Esophagus muscularis mucosa (tissue), 4 donors: ENCODE measurements at regions of chr12 and their contacts with region 1.

Region 1: DNA sequence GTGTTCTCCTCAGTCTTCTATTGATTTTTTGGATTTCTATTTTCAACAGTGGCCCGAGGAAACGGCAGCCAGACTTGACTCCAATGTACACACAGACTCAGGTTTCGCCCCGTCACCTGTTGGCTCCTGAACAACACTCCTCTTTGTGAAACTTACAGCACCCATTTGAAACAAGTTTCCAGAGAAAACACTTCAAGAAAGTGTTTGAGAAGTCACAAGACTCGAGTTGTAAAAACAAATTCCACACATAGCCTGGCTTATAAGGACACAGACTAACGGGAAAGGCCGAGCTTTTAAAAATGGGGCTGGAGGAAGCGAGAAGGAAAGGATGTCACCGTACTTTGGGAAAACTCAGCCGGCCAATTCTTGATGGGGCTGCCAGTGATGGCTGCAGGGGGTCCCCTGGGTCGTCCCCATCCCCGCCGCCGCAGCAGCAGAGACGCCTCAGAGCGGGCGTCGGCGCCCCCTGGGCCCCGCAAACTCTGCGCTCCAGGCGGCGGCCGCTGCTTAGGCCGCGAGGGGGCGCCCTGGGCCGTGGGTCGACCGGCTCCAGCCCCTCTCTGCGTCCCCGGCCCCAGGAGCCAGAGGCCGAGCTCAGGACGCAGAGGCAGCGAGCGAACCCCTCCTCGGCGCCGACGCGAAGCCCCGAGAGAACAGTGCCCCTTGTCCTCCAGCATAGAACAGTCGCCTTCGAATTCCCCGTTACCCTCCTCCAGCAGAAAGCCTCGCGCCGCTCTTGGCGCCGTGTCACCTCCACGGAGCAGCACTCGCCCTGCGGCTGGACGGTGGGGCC is 106.9 kb downstream of the PRICKLE1 start:
- DNase-seq: no peak
- H3K4me3 ChIP-seq: peak overlapping the region; percentile 76 to 94 (median 84)
- H3K27ac ChIP-seq: peak overlapping the region; percentile 88 to 97 (median 91)
- H3K4me1 ChIP-seq: peaks cover 27 to 39% (median 29%) of the 10 kb centered on the region in 4 donors
- H3K27me3 ChIP-seq: no peaks in the 10 kb centered on the region
- CTCF ChIP-seq: peak; percentile 81 to 98 (median 96)
- EP300 ChIP-seq: peak; percentile 12
- POLR2A ChIP-seq: no peak

Region 2: DNA sequence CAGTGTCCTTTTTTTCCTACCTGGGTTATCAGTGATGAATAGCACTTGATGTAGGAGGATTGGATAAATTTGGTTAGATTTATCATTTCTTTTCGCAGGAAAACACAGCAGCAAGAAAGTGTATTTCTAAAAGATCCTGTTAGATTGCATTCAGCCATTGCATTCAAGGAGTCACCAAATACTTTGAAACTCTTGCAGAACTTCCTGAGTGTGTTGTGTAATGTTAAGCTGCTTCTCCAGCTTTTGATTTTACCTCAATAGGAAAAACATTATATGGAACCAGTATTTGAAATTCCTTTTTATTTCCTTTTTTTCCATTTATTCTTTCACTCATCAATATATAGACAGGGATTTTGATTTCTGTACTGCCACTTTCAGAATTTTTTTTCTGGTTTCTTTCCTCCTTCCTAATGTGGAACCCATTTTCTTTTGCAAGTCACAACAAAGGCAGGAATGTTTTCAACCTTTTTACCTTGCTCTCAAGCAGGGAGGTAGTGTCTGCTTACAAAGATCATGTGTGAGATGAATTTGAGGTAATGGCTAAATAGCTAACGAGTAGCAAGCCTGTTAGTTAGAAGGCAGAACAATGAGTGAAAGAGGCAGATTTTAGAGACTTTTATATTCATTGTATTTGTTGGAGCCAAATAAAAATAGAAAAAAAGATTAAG is 100.5 kb before region 1 on chr12:
- intact Hi-C with region 1: no loop called
- DNase-seq: no peak
- H3K4me3 ChIP-seq: no peak overlapping the region
- H3K27ac ChIP-seq: no peak overlapping the region
- H3K4me1 ChIP-seq: peaks cover 0 to 7% (median 0%) of the 10 kb centered on the region in 4 donors
- H3K27me3 ChIP-seq: no peaks in the 10 kb centered on the region
- CTCF ChIP-seq: no peak
- EP300 ChIP-seq: no peak
- POLR2A ChIP-seq: no peak

Region 3: GRCh38 chr12:42568952-42569915 is 86.6 kb after region 1 on chr12:
- intact Hi-C with region 1: loop called (anchors 2 kb)
- DNase-seq: no peak
- H3K4me3 ChIP-seq: no peak overlapping the region
- H3K27ac ChIP-seq: no peak overlapping the region
- H3K4me1 ChIP-seq: peaks cover 10 to 19% (median 16%) of the 10 kb centered on the region in 4 donors
- H3K27me3 ChIP-seq: no peaks in the 10 kb centered on the region
- CTCF ChIP-seq: peak; percentile 44 to 61 (median 49)
- EP300 ChIP-seq: no peak
- POLR2A ChIP-seq: no peak

Region 4: GRCh38 chr12:43282106-43282505 is 799.5 kb after region 1 on chr12:
- intact Hi-C with region 1: loop called (anchors 2 kb)
- DNase-seq: no peak
- H3K4me3 ChIP-seq: no peak overlapping the region
- H3K27ac ChIP-seq: no peak overlapping the region
- H3K4me1 ChIP-seq: peaks cover 0 to 14% (median 6%) of the 10 kb centered on the region in 4 donors
- H3K27me3 ChIP-seq: no peaks in the 10 kb centered on the region
- CTCF ChIP-seq: peak; percentile 24 to 29 (median 26)
- EP300 ChIP-seq: no peak
- POLR2A ChIP-seq: no peak

Region 5: GRCh38 chr12:43338848-43339526 is 856.3 kb after region 1 on chr12:
- intact Hi-C with region 1: loop called (anchors 2 kb)
- DNase-seq: no peak
- H3K4me3 ChIP-seq: no peak overlapping the region
- H3K27ac ChIP-seq: peak overlapping the region; percentile 21 to 56 (median 46)
- H3K4me1 ChIP-seq: peaks cover 7 to 14% (median 9%) of the 10 kb centered on the region in 4 donors
- H3K27me3 ChIP-seq: no peaks in the 10 kb centered on the region
- CTCF ChIP-seq: peak; percentile 62 to 75 (median 62)
- EP300 ChIP-seq: no peak
- POLR2A ChIP-seq: no peak